ENCODE measurements at regions of chr5 and their contacts with region 1.

Region 1: GRCh38 chr5:75053304-75054133 is 1.2 kb upstream of the GCNT4 start:
- DNase-seq: peak in 8 of 9 donors; percentile 49 to 81 (median 73)
- ATAC-seq: peak; percentile 57
- H3K4me3 ChIP-seq: peak overlapping the region; percentile 67
- H3K4me3 Mint-ChIP-seq: peak overlapping the region; percentile 89 to 95 (median 93)
- H3K27ac ChIP-seq: peak overlapping the region; percentile 87
- H3K27ac Mint-ChIP-seq: peak overlapping the region; percentile 84 to 99 (median 97)
- H3K4me1 ChIP-seq: peaks cover 64 to 75% of the 10 kb centered on the region in 2 donors
- H3K4me1 Mint-ChIP-seq: peaks cover 57 to 86% (median 79%) of the 10 kb centered on the region in 7 donors
- H3K27me3 ChIP-seq: no peaks in the 10 kb centered on the region
- H3K27me3 Mint-ChIP-seq: peaks cover 0 to 17% (median 0%) of the 10 kb centered on the region in 5 donors

Region 2: GRCh38 chr5:74766849-74767578 is 286.5 kb before region 1 on chr5 and contains the starts of genes GFM2 and NSA2:
- CTCF ChIA-PET with region 1: no interaction called
- POLR2A ChIA-PET with region 1: interaction called, 5 read pairs
- intact Hi-C with region 1: loop called (anchors 1 kb)
- DNase-seq: peak; percentile 77 to 94 (median 92)
- ATAC-seq: peak; percentile 97
- H3K4me3 ChIP-seq: peak within 1 kb of the TSS; percentile 98
- H3K4me3 Mint-ChIP-seq: peak within 1 kb of the TSS; percentile 97 to 100 (median 99)
- H3K27ac ChIP-seq: peak within 1 kb of the TSS; percentile 81
- H3K27ac Mint-ChIP-seq: peak within 1 kb of the TSS; percentile 95 to 99 (median 98)
- H3K4me1 ChIP-seq: peaks cover 22% of the 10 kb centered on the region in 2 donors
- H3K4me1 Mint-ChIP-seq: peaks cover 12 to 57% (median 40%) of the 10 kb centered on the region in 7 donors
- H3K27me3 ChIP-seq: no peaks in the 10 kb centered on the region
- H3K27me3 Mint-ChIP-seq: no peaks in the 10 kb centered on the region
- total RNA-seq, gene GFM2: 17.8 to 30.2 (median 20.5) TPM
- total RNA-seq, gene NSA2: 70.9 to 153 (median 126) TPM

Region 3: GRCh38 chr5:74822288-74822687 is 231.2 kb before region 1 on chr5:
- CTCF ChIA-PET with region 1: no interaction called
- POLR2A ChIA-PET with region 1: no interaction called
- intact Hi-C with region 1: no loop called
- DNase-seq: no peak
- ATAC-seq: no peak
- H3K4me3 ChIP-seq: no peak overlapping the region
- H3K4me3 Mint-ChIP-seq: no peak overlapping the region
- H3K27ac ChIP-seq: no peak overlapping the region
- H3K27ac Mint-ChIP-seq: no peak overlapping the region
- H3K4me1 ChIP-seq: no peaks in the 10 kb centered on the region
- H3K4me1 Mint-ChIP-seq: peaks cover 0 to 35% (median 14%) of the 10 kb centered on the region in 7 donors
- H3K27me3 ChIP-seq: no peaks in the 10 kb centered on the region
- H3K27me3 Mint-ChIP-seq: no peaks in the 10 kb centered on the region

Region 4: DNA sequence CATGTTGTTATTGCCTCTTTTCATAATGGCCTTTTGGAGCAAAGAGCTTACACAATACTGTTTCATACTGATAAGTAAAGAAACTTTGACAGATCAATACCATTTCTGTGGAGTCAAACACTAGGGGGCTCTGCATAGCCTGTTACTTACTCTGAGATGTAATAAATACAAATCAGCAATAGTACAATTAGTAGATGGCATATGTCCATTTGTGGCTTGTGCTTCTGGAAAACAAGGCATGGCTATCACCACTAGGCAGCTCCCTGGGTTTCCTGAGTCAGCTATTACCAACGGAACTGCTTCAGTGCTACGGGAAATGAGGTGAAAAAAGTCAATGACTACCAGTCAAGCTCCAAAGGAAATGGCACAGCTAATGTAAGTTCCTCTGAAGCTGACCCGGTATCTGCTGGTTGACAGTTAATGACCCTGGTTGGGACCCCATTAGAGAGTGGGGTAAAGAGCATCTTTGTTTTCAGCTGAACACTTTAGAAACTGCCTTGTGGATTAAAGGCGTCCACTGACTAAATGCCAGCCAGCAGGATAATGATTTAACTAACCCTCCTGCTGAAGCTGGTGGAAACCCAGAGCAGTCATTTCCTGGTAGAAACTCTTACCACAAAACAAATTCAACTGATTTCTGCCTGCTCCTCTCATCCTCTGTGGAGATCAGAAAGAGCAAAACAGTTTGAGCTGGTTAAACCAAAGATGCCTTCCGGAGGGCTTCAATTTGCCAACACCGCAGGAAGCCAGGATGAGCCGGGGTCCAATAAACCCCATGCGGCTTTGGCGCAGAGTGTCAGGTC is 118.4 kb before region 1 on chr5:
- CTCF ChIA-PET with region 1: interaction called, 17 read pairs
- POLR2A ChIA-PET with region 1: interaction called, 9 read pairs
- intact Hi-C with region 1: loop called (anchors 1 to 5 kb)
- DNase-seq: peak in 8 of 9 donors; percentile 14 to 65 (median 44)
- ATAC-seq: peak; percentile 79
- H3K4me3 ChIP-seq: peak overlapping the region; percentile 34
- H3K4me3 Mint-ChIP-seq: peak overlapping the region; percentile 65 to 84 (median 76)
- H3K27ac ChIP-seq: peak overlapping the region; percentile 50
- H3K27ac Mint-ChIP-seq: peak overlapping the region; percentile 52 to 89 (median 85)
- H3K4me1 ChIP-seq: peaks cover 9 to 20% of the 10 kb centered on the region in 2 donors
- H3K4me1 Mint-ChIP-seq: peaks cover 13 to 50% (median 42%) of the 10 kb centered on the region in 7 donors
- H3K27me3 ChIP-seq: no peaks in the 10 kb centered on the region
- H3K27me3 Mint-ChIP-seq: peaks cover 0 to 6% (median 0%) of the 10 kb centered on the region in 5 donors

Region 5: DNA sequence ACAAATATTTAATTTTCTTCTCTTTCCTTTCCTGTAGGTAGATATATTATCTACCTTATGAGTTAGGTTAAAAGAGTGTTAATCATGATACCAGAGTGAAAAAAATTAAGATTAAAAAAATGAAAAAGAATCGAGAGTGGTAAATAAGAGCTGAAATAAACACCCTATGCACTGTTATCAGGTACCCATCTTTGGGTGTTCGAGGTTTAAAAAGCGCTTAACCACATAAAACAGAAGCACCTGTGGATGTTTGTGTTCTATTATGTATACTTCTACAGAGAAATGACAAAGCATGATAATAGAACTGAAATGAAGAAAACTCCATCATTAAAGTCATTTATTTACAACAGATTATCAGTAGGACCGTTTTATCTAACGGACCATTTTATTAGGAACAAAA is 24.5 kb after region 1 on chr5:
- CTCF ChIA-PET with region 1: interaction called, 3 read pairs
- POLR2A ChIA-PET with region 1: interaction called, 11 read pairs
- intact Hi-C with region 1: no loop called
- DNase-seq: peak in 6 of 9 donors; percentile 39 to 78 (median 60)
- ATAC-seq: peak; percentile 87
- H3K4me3 ChIP-seq: no peak overlapping the region
- H3K4me3 Mint-ChIP-seq: peak overlapping the region in 7 of 10 donors; percentile 9 to 52 (median 29)
- H3K27ac ChIP-seq: no peak overlapping the region
- H3K27ac Mint-ChIP-seq: peak overlapping the region in 3 of 9 donors; percentile 67 to 78 (median 76)
- H3K4me1 ChIP-seq: peaks cover 3 to 12% of the 10 kb centered on the region in 2 donors
- H3K4me1 Mint-ChIP-seq: peaks cover 3 to 49% (median 34%) of the 10 kb centered on the region in 7 donors
- H3K27me3 ChIP-seq: no peaks in the 10 kb centered on the region
- H3K27me3 Mint-ChIP-seq: peaks cover 0 to 5% (median 0%) of the 10 kb centered on the region in 5 donors

Region 6: DNA sequence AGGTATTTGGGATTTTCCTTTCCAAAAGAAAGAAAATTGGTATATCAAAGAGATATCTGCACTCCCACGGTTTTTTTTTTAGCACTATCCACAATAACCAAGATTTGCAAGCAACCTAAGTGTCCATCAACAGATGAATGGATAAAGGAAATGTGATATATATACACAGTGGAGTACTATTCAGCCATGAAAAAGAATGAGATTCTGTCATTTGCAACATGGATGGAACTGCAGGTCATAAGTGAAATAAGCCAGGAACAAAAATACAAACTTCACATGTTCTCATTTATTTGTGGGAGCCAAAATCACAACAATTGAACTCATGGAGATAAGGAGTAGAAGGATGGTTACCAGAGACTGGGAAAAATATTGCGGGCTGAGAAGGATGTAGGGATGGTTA is 173.4 kb after region 1 on chr5:
- CTCF ChIA-PET with region 1: interaction called, 8 read pairs
- POLR2A ChIA-PET with region 1: interaction called, 4 read pairs
- intact Hi-C with region 1: loop called in 1 of 2 experiments (anchors 1 kb)
- DNase-seq: no peak
- ATAC-seq: no peak
- H3K4me3 ChIP-seq: no peak overlapping the region
- H3K4me3 Mint-ChIP-seq: no peak overlapping the region
- H3K27ac ChIP-seq: no peak overlapping the region
- H3K27ac Mint-ChIP-seq: no peak overlapping the region
- H3K4me1 ChIP-seq: no peaks in the 10 kb centered on the region
- H3K4me1 Mint-ChIP-seq: peaks cover 0 to 4% (median 0%) of the 10 kb centered on the region in 7 donors
- H3K27me3 ChIP-seq: peaks cover 0 to 2% of the 10 kb centered on the region in 2 donors
- H3K27me3 Mint-ChIP-seq: peaks cover 0 to 3% (median 0%) of the 10 kb centered on the region in 5 donors

Region 7: GRCh38 chr5:75511435-75512384 is 458.2 kb after region 1 on chr5 and contains the starts of genes CERT1 and POLK:
- CTCF ChIA-PET with region 1: no interaction called
- POLR2A ChIA-PET with region 1: interaction called, 3 read pairs
- intact Hi-C with region 1: loop called (anchors 2 to 5 kb)
- DNase-seq: peak; percentile 70 to 94 (median 90)
- ATAC-seq: peak; percentile 95
- H3K4me3 ChIP-seq: peak within 1 kb of the TSS; percentile 78
- H3K4me3 Mint-ChIP-seq: peak within 1 kb of the TSS; percentile 89 to 97 (median 94)
- H3K27ac ChIP-seq: peak within 1 kb of the TSS; percentile 75
- H3K27ac Mint-ChIP-seq: peak within 1 kb of the TSS; percentile 84 to 98 (median 93)
- H3K4me1 ChIP-seq: peaks cover 14 to 28% of the 10 kb centered on the region in 2 donors
- H3K4me1 Mint-ChIP-seq: peaks cover 29 to 77% (median 54%) of the 10 kb centered on the region in 7 donors
- H3K27me3 ChIP-seq: no peaks in the 10 kb centered on the region
- H3K27me3 Mint-ChIP-seq: no peaks in the 10 kb centered on the region
- total RNA-seq, gene CERT1: 34.4 to 60.4 (median 39.3) TPM
- total RNA-seq, gene POLK: 20.6 to 36.6 (median 24.9) TPM

Region 8: GRCh38 chr5:76256116-76256889 is 1202.8 kb after region 1 on chr5:
- CTCF ChIA-PET with region 1: no interaction called
- POLR2A ChIA-PET with region 1: no interaction called
- intact Hi-C with region 1: loop called (anchors 1 to 5 kb)
- DNase-seq: peak; percentile 20 to 70 (median 56)
- ATAC-seq: peak; percentile 96
- H3K4me3 ChIP-seq: no peak overlapping the region
- H3K4me3 Mint-ChIP-seq: peak overlapping the region in 4 of 10 donors; percentile 23 to 45 (median 42)
- H3K27ac ChIP-seq: no peak overlapping the region
- H3K27ac Mint-ChIP-seq: peak overlapping the region in 3 of 9 donors; percentile 8 to 23 (median 11)
- H3K4me1 ChIP-seq: no peaks in the 10 kb centered on the region
- H3K4me1 Mint-ChIP-seq: peaks cover 0 to 12% (median 3%) of the 10 kb centered on the region in 7 donors
- H3K27me3 ChIP-seq: no peaks in the 10 kb centered on the region
- H3K27me3 Mint-ChIP-seq: peaks cover 4 to 36% (median 4%) of the 10 kb centered on the region in 5 donors

Measured in naive thymus-derived CD4-positive, alpha-beta T cell (primary cell).